ENCODE measurements at regions of chr9 and their contacts with region 1.

Region 1: DNA sequence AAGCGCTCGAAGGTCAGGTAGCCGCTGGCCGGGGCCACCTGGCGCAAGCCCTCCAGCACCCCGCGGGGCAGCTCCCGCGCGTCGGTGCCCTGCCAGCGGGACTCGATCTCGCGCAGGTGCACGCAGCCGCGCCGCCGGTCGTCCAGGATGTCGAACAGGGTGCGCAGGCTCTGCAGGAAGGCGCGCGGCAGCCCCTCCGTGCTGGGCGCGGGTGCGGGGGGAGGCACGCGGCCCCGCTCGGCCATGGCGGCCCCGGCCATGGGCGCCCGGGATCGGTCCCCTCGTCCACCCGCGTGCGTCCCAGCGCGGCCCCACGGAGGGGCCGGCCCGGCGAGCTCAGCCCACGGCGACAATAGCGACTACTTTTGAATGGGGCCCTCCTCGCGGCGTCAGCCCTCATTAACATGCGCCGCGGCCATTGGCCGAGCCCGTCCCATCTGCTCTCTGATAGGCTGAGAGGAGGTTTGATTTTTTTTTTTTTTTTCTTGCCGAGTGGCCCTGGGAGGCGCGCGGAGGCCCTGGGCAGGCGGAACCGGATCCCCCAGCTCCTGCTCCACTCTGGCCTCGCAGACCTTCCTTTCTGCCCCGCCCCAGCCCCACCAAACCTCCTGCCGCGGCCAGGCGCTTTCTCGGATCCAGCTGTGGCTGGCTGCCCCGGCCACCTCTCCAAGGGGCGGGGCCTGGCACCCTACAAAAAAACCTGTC is at the start of gene SAPCD2:
- DNase-seq: peak; percentile 95
- H3K4me3 ChIP-seq: peak within 1 kb of the TSS; percentile 53 to 57
- H3K27ac ChIP-seq: peak within 1 kb of the TSS in 1 of 2 experiments; percentile 80; a peak in 2 of 4 replicates
- H3K4me1 ChIP-seq: peaks cover 0 to 29% of the 10 kb centered on the region in 2 experiments; a peak in 1 of 4 replicates
- H3K27me3 ChIP-seq: no peaks in the 10 kb centered on the region
- CTCF ChIP-seq: no peak
- EP300 ChIP-seq: no peak
- RAD21 ChIP-seq: no peak
- polyA plus RNA-seq, gene SAPCD2: 4.6 and 6.0 TPM in 2 replicates

Region 2: GRCh38 chr9:137055385-137056364 is 14.7 kb before region 1 on chr9:
- CTCF ChIA-PET with region 1: interaction called, 803 read pairs
- POLR2A ChIA-PET with region 1: interaction called, 17 read pairs
- DNase-seq: peak; percentile 94
- H3K4me3 ChIP-seq: no peak overlapping the region
- H3K27ac ChIP-seq: peak overlapping the region; percentile 32 to 96; a peak in 3 of 4 replicates
- H3K4me1 ChIP-seq: peaks cover 0 to 29% of the 10 kb centered on the region in 2 experiments; a peak in 2 of 4 replicates
- H3K27me3 ChIP-seq: no peaks in the 10 kb centered on the region
- CTCF ChIP-seq: no peak
- EP300 ChIP-seq: peak in 1 of 2 experiments; percentile 66; a peak in 2 of 4 replicates
- RAD21 ChIP-seq: peak; percentile 20; the same call in 1 of the 2 replicates

Region 3: DNA sequence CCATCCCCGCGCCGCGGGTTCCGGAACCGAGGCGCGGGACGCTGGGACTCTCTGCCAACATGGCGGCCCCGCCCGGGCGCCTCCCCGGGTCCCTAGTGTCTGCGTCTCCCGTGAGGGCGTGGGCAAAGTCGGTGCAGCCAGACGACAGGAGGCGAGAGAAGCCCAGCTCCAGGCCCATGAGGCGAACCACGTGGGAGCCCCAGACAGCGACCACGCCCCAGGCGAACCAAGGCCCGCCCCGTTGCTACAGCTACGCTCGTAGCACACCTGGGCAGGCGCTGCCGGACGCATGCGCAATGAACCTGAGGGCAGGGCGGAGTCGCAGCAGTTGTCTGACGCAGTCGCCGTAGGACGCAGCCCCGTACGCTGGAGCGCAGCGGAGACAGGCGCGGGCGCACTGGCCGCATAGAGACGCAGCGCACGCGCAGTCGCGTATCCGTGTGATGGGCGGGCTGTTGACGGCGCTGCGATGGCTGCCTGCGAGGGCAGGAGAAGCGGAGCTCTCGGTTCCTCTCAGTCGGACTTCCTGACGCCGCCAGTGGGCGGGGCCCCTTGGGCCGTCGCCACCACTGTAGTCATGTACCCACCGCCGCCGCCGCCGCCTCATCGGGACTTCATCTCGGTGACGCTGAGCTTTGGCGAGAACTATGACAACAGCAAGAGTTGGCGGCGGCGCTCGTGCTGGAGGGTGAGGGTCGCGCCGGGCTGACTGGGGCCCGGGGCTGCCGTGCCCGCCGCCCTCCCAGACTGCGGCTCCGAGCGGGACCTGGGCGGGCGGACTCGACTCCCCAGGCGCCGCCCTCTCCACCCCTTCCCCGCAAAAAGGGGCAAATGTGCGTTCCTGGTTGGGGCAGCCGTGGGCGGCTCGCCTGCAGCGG is 16.4 kb after region 1 on chr9 and contains the start of gene MAN1B1:
- CTCF ChIA-PET with region 1: interaction called, 17 read pairs
- POLR2A ChIA-PET with region 1: interaction called, 21 read pairs
- DNase-seq: peak; percentile 98
- H3K4me3 ChIP-seq: peak within 1 kb of the TSS; percentile 80 to 93
- H3K27ac ChIP-seq: peak within 1 kb of the TSS; percentile 57 to 88
- H3K4me1 ChIP-seq: peaks cover 13 to 21% of the 10 kb centered on the region in 2 experiments
- H3K27me3 ChIP-seq: no peaks in the 10 kb centered on the region
- CTCF ChIP-seq: no peak
- EP300 ChIP-seq: no peak
- RAD21 ChIP-seq: no peak
- polyA plus RNA-seq, gene MAN1B1: 57.8 and 61.9 TPM in 2 replicates

Measured in SK-N-SH (cell line).